ENCODE measurements at regions of chr5 and their contacts with region 1.

Region 1: GRCh38 chr5:52915176-52915875 is 73.8 kb upstream of the ITGA2 start:
- DNase-seq: peak; percentile 59
- ATAC-seq: peak; percentile 88
- H3K4me3 Mint-ChIP-seq: no peak overlapping the region
- H3K27ac Mint-ChIP-seq: no peak overlapping the region
- H3K4me1 Mint-ChIP-seq: peaks cover 7% of the 10 kb centered on the region
- H3K27me3 Mint-ChIP-seq: peaks cover 3% of the 10 kb centered on the region

Region 2: DNA sequence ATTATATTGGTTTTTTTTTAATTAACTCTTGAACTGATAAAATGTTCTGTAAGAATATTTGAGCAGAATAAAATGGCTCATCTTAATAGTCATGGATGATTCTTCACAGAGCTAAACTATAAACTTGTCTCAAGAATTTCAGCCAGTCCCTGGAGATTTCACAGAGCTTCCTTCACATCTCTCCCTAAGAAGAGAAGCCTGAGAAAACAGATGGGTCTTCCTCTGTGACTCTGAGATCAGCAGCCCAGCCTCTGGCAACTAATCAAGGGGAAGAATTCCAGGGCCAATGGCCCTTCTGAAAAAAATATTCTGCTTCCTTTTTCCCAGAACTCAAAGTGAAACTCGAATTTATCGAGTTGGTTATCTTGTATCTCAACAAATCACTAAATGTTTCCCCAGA is 249.8 kb before region 1 on chr5:
- CTCF ChIA-PET with region 1: no interaction called
- POLR2A ChIA-PET with region 1: no interaction called
- intact Hi-C with region 1: loop called in 1 of 2 experiments (anchors 2 kb)
- DNase-seq: no peak
- ATAC-seq: no peak
- H3K4me3 Mint-ChIP-seq: no peak overlapping the region
- H3K27ac Mint-ChIP-seq: no peak overlapping the region
- H3K4me1 Mint-ChIP-seq: peaks cover 2% of the 10 kb centered on the region
- H3K27me3 Mint-ChIP-seq: no peaks in the 10 kb centered on the region

Region 3: GRCh38 chr5:52693280-52693679 is 222.0 kb before region 1 on chr5:
- CTCF ChIA-PET with region 1: interaction called, 9 read pairs
- POLR2A ChIA-PET with region 1: no interaction called
- intact Hi-C with region 1: loop called (anchors 1 kb)
- DNase-seq: peak; percentile 39
- ATAC-seq: no peak
- H3K4me3 Mint-ChIP-seq: no peak overlapping the region
- H3K27ac Mint-ChIP-seq: no peak overlapping the region
- H3K4me1 Mint-ChIP-seq: no peaks in the 10 kb centered on the region
- H3K27me3 Mint-ChIP-seq: no peaks in the 10 kb centered on the region

Region 4: GRCh38 chr5:52787600-52788504 is 127.5 kb before region 1 on chr5 and contains the starts of genes ITGA1 and PELO:
- CTCF ChIA-PET with region 1: interaction called, 9 read pairs
- POLR2A ChIA-PET with region 1: no interaction called
- intact Hi-C with region 1: loop called (anchors 1 kb)
- DNase-seq: peak; percentile 70
- ATAC-seq: peak; percentile 78
- H3K4me3 Mint-ChIP-seq: peak within 1 kb of the TSS; percentile 78
- H3K27ac Mint-ChIP-seq: peak within 1 kb of the TSS; percentile 52
- H3K4me1 Mint-ChIP-seq: peaks cover 22% of the 10 kb centered on the region
- H3K27me3 Mint-ChIP-seq: peaks cover 16% of the 10 kb centered on the region
- total RNA-seq, gene ITGA1: 1.9 to 3.9 TPM
- total RNA-seq, gene PELO: 12.8 to 17.3 TPM

Region 5: DNA sequence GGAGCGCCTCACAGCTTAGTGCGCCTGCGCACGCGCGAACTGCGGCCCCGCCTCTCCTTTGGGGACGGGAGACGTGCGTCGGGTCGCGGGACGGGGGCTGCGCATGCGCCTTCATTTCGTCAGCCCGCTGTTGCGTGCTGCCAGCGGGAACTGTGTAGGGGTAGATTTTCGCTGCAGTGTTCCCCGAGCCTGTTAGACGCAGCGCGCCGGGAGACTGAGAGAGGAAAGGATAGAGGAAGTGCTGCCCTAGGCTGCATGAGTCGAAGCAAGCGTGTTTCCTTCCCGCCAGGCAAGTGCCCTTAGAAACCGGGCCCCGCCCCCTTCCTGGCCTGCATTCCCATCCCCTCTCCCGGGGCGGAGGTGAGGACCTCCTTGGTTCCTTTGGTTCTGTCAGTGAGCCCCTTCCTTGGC is 115.3 kb before region 1 on chr5:
- CTCF ChIA-PET with region 1: interaction called, 10 read pairs
- POLR2A ChIA-PET with region 1: no interaction called
- intact Hi-C with region 1: loop called (anchors 5 kb)
- DNase-seq: peak; percentile 98
- ATAC-seq: peak; percentile 91
- H3K4me3 Mint-ChIP-seq: peak overlapping the region; percentile 91
- H3K27ac Mint-ChIP-seq: peak overlapping the region; percentile 97
- H3K4me1 Mint-ChIP-seq: peaks cover 47% of the 10 kb centered on the region
- H3K27me3 Mint-ChIP-seq: no peaks in the 10 kb centered on the region

Region 6: DNA sequence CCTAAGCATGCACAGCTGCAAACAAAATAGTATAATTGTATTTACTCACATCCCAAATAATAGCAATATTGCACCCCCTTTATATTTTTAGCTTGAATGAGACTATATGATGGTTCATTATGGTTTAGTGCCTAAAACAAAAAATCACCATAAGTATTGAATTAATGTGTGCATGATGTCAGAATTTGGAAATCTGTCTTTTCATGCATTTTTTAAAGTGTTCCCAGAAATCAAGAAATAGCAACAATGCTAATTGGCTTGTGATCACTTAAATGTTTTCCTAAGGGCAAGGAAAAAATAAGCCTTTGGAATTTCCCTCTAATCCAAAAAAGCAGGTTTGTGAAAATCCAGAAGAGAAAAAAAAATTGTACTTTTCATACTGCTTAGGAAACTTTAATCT is 22.9 kb after region 1 on chr5:
- CTCF ChIA-PET with region 1: no interaction called
- POLR2A ChIA-PET with region 1: no interaction called
- intact Hi-C with region 1: no loop called
- DNase-seq: no peak
- ATAC-seq: no peak
- H3K4me3 Mint-ChIP-seq: no peak overlapping the region
- H3K27ac Mint-ChIP-seq: no peak overlapping the region
- H3K4me1 Mint-ChIP-seq: no peaks in the 10 kb centered on the region
- H3K27me3 Mint-ChIP-seq: no peaks in the 10 kb centered on the region

Region 7: DNA sequence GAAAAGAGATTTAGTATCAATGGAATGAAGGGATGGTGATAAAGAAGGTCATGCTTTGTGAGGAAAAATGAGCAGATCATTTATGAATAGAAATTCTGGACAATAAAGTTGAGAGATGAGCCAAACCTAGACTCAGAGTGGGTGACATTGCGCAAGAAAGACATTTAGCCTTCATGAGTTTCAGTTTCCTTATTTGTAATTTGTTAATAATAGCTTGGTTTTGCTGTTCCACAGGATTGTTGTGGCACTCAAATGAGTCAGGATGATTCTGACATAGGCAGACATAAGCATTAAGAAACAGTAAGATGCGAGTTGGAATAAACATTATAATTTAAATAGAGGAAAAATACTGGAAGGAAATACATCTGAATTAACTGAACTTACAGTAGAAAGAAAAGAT is 108.6 kb after region 1 on chr5:
- CTCF ChIA-PET with region 1: no interaction called
- POLR2A ChIA-PET with region 1: no interaction called
- intact Hi-C with region 1: no loop called
- DNase-seq: peak; percentile 18
- ATAC-seq: peak; percentile 57
- H3K4me3 Mint-ChIP-seq: no peak overlapping the region
- H3K27ac Mint-ChIP-seq: no peak overlapping the region
- H3K4me1 Mint-ChIP-seq: no peaks in the 10 kb centered on the region
- H3K27me3 Mint-ChIP-seq: peaks cover 2% of the 10 kb centered on the region

Region 8: DNA sequence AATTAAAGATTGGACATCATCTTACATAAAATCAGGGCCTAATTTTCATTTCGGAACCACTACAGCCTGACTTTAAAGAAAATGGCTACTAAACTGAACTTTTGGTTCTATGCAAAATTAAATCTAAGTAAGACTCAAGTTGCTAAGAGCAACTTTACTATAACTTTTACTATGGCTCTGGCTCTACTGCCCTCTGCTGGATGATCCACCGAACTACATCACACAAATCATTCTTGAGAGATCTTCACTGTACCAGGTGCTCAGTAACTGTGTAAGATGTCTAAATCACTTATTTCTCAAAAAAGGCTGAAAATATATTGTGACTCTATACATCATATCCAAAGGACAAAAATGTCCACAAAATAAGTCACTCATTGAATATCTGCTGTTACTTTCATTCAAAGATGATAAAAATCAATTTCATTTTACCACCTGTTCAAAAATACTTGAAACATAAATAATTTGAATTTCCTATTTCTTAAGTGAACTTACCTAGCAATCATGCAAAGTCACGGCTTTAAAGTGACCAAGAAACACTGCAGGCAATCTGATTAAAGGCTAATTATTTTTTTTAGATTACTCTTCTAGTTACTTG is 180.7 kb after region 1 on chr5:
- CTCF ChIA-PET with region 1: interaction called, 5 read pairs
- POLR2A ChIA-PET with region 1: no interaction called
- intact Hi-C with region 1: loop called in 1 of 2 experiments (anchors 1 kb)
- DNase-seq: peak; percentile 83
- ATAC-seq: peak; percentile 66
- H3K4me3 Mint-ChIP-seq: no peak overlapping the region
- H3K27ac Mint-ChIP-seq: no peak overlapping the region
- H3K4me1 Mint-ChIP-seq: peaks cover 6% of the 10 kb centered on the region
- H3K27me3 Mint-ChIP-seq: no peaks in the 10 kb centered on the region

Region 9: GRCh38 chr5:53392073-53392472 is 476.7 kb after region 1 on chr5:
- CTCF ChIA-PET with region 1: no interaction called
- POLR2A ChIA-PET with region 1: no interaction called
- intact Hi-C with region 1: no loop called
- DNase-seq: no peak
- ATAC-seq: no peak
- H3K4me3 Mint-ChIP-seq: no peak overlapping the region
- H3K27ac Mint-ChIP-seq: no peak overlapping the region
- H3K4me1 Mint-ChIP-seq: no peaks in the 10 kb centered on the region
- H3K27me3 Mint-ChIP-seq: peaks cover 7% of the 10 kb centered on the region